ENCODE measurements at regions of chr10 and their contacts with region 1.

Region 1: DNA sequence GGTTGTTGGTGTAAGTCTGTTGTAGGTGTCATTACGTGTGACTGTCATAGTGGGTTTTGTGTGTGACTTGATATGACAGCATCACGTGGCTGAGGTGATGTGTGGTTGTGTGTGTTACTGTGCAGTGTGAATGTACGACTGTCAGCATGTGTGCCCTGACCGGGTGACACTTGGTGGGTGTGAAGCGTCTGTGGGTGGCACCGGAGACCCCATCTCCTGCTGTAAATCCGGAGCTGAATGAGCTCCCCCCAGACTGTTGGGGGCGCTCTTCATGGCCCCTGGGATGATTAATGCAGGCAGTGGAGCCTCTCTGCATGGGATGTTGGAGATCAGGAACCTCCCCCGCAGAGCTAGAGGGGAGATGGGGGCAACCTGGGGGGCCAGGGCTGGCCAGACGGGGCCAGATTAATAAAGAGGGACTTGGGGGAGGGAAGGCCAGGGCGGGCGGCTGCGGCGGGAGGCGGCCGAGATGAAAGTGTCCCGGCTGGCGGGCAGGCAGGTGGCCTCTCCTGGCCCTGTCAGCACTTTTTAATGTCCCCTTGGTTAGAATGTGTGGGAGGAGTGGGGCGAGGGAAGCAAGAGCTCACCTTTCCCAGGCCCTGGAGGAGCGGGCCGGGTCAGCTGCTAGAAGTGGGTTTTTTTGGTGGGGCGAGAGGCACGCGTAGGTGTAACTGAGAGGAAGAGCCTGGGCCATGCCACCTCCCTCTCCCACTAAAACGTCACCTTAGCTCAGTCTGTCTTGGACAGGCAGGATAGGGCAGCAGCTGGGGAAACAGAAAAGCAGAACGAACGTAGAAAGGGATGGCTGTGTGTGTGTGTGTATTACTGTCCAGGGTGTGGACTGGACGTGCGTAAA is 34.1 kb downstream of the HIF1AN start:
- DNase-seq: peak; percentile 62
- ATAC-seq: peak; percentile 82
- H3K4me3 Mint-ChIP-seq: no peak overlapping the region
- H3K27ac Mint-ChIP-seq: no peak overlapping the region
- H3K4me1 Mint-ChIP-seq: no peaks in the 10 kb centered on the region
- H3K27me3 Mint-ChIP-seq: peaks cover 35% of the 10 kb centered on the region
- CTCF ChIP-seq: no peak; the same call in 1 of the 2 replicates

Region 2: DNA sequence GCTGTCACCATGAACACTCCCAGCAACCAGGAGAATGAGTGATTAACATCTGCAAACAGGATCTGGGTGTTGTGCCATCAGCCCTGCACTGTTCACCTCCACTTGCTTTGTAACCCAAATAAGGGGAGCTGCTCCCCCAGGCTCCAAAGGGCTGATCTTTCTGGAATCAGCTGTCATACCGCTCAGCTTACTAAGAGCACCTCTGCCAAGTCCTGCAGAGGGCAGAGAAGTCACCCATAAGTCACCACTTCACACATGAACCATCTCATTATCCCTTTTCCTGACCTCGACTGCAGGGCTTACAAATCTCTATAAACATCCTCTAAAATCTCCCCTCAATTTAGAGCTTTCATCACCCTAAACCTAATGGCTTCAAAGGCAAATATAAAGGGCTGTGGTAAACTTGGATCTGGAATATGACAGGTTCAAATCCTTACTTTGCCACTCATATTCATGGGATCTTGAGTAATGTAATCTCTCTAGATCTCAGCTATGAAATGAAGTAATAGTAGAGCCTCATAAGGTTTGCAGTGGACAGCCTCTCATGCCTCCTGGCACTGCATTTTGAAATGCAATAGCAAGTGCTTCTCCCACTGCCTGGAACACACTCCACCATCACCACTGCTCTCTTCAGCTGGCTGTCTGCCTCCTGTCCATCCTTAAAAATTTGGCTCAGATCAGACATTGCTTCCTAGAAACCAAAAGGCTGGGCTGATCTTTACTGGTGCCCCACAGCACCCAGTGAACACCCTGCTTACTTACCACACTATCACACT is 422.8 kb before region 1 on chr10:
- CTCF ChIA-PET with region 1: no interaction called
- POLR2A ChIA-PET with region 1: no interaction called
- DNase-seq: no peak
- ATAC-seq: 0 out of 2 replicates have a peak, but pooled peaks have one; percentile 18
- H3K4me3 Mint-ChIP-seq: no peak overlapping the region
- H3K27ac Mint-ChIP-seq: no peak overlapping the region
- H3K4me1 Mint-ChIP-seq: peaks cover 14% of the 10 kb centered on the region
- H3K27me3 Mint-ChIP-seq: no peaks in the 10 kb centered on the region; the same call in 1 of the 2 replicates
- CTCF ChIP-seq: no peak

Region 3: GRCh38 chr10:100518761-100519241 is 51.0 kb before region 1 on chr10:
- CTCF ChIA-PET with region 1: interaction called, 14 read pairs
- POLR2A ChIA-PET with region 1: no interaction called
- DNase-seq: peak; percentile 69
- ATAC-seq: peak; percentile 36
- H3K4me3 Mint-ChIP-seq: peak overlapping the region; percentile 91
- H3K27ac Mint-ChIP-seq: no peak overlapping the region
- H3K4me1 Mint-ChIP-seq: 0 out of 2 replicates have a peak, but pooled peaks cover 8% of the 10 kb centered on the region
- H3K27me3 Mint-ChIP-seq: peaks cover 42% of the 10 kb centered on the region
- CTCF ChIP-seq: peak; percentile 56; the same call in 1 of the 2 replicates

Region 4: GRCh38 chr10:100614429-100615095 is 44.7 kb after region 1 on chr10:
- CTCF ChIA-PET with region 1: interaction called, 11 read pairs
- POLR2A ChIA-PET with region 1: no interaction called
- DNase-seq: no peak
- ATAC-seq: peak; percentile 73
- H3K4me3 Mint-ChIP-seq: no peak overlapping the region
- H3K27ac Mint-ChIP-seq: no peak overlapping the region
- H3K4me1 Mint-ChIP-seq: peaks cover 5% of the 10 kb centered on the region; the same call in 1 of the 2 replicates
- H3K27me3 Mint-ChIP-seq: peaks cover 14% of the 10 kb centered on the region
- CTCF ChIP-seq: no peak

Region 5: GRCh38 chr10:100653957-100654781 is 84.3 kb after region 1 on chr10:
- CTCF ChIA-PET with region 1: interaction called, 10 read pairs
- POLR2A ChIA-PET with region 1: no interaction called
- DNase-seq: peak; percentile 70
- ATAC-seq: peak; percentile 29
- H3K4me3 Mint-ChIP-seq: peak overlapping the region; percentile 81
- H3K27ac Mint-ChIP-seq: no peak overlapping the region
- H3K4me1 Mint-ChIP-seq: peaks cover 28% of the 10 kb centered on the region
- H3K27me3 Mint-ChIP-seq: peaks cover 75% of the 10 kb centered on the region
- CTCF ChIP-seq: no peak

Region 6: DNA sequence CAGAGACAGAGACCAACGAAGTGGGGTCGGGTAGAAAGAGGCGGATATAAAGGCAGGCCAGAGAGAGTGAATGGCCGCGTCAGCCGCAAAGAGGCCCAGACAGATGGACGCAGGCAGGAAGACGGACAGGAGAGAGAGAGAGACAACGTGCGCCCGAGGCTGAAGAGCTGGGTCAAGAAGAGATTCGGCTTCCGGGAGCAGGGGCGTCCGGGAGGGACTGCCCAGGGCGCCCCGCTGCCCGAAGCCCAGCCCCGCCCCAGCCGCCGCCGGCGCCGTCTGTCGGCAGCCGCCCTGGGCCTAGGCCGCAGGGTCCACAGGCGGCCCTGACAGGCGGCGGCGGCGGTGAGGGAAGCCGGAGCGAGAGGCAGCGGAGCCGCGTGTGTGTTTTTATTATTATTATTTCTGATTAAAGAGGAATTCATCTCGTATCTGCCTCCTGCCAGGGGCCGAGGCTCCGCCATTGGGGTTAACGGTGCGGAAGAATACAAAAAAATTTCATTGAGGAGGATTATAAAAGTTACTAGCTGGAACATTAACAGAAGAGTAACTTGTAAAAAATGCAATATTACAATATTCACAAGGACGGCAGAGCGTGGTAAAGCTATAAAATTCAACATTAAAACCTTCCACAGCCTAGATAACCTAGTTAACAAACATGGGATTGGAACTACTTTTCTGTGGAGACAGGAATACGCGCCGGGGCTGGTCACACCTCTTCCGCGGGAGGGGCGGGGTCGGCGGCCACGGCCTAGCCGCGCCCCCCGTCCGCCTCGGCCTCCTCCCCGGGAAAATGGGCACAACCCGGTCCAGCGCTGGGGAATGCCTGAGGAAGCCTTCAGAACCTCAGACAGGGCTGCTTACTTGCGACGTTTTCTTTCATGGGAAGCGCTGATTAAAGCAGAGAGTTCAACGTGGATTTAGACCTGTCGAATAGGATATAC is 145.9 kb after region 1 on chr10:
- CTCF ChIA-PET with region 1: interaction called, 11 read pairs
- POLR2A ChIA-PET with region 1: no interaction called
- DNase-seq: peak; percentile 46
- ATAC-seq: peak; percentile 70
- H3K4me3 Mint-ChIP-seq: peak overlapping the region; percentile 79
- H3K27ac Mint-ChIP-seq: no peak overlapping the region
- H3K4me1 Mint-ChIP-seq: peaks cover 16% of the 10 kb centered on the region
- H3K27me3 Mint-ChIP-seq: peaks cover 100% of the 10 kb centered on the region
- CTCF ChIP-seq: no peak

Region 7: GRCh38 chr10:100817268-100817839 is 247.5 kb after region 1 on chr10:
- CTCF ChIA-PET with region 1: interaction called, 11 read pairs
- POLR2A ChIA-PET with region 1: no interaction called
- DNase-seq: peak; percentile 72
- ATAC-seq: peak; percentile 97
- H3K4me3 Mint-ChIP-seq: no peak overlapping the region
- H3K27ac Mint-ChIP-seq: no peak overlapping the region
- H3K4me1 Mint-ChIP-seq: peaks cover 24% of the 10 kb centered on the region
- H3K27me3 Mint-ChIP-seq: peaks cover 32% of the 10 kb centered on the region
- CTCF ChIP-seq: 0 out of 2 replicates have a peak, but pooled peaks have one; percentile 18

Region 8: GRCh38 chr10:100878291-100878910 is 308.6 kb after region 1 on chr10:
- CTCF ChIA-PET with region 1: interaction called, 107 read pairs
- POLR2A ChIA-PET with region 1: interaction called, 7 read pairs
- DNase-seq: peak; percentile 75
- ATAC-seq: peak; percentile 86
- H3K4me3 Mint-ChIP-seq: no peak overlapping the region
- H3K27ac Mint-ChIP-seq: no peak overlapping the region
- H3K4me1 Mint-ChIP-seq: peaks cover 31% of the 10 kb centered on the region
- H3K27me3 Mint-ChIP-seq: peaks cover 28% of the 10 kb centered on the region
- CTCF ChIP-seq: peak; percentile 30

Measured in WTC11 (cell line).